B cell (primary cell): ENCODE measurements at regions of chr11 and their contacts with region 1.

Region 1: DNA sequence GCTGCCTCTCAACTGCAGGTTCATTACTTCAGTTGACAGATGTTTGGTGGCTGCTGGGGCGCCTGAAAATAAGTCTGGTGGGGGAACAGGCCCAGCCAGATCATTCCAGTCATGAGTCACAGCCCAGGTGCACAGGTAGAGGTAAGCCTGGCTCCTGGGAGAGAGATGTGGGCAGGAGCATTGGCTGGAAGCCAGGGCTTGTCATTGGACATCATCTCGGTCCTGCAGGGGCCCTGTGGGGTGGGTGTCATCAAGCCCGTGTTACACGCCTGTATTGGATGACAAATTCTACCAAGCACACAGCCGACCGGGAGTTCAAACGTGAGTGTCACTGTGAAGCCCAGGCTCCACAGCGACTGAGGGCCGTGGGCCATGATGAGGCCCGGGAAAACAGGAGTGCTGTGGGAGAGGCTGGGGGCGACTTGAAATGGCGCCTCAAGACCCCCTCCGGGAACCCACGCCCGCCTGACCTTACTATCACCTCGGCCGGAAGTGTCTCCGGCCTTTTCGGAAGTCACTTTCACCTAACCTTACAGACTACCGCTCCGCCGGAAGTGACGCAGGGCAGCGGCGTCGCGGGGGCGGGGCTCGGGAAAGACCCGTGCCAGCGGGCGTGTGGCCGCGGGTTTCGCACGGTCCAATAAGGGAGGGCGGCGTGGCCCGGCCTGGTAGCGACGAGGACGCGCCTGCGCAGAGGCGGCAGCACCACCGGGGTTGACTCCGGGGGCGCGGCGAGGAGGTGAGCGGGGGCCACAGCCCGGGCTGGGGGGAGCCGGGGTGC is at the start of gene FKBP2:
- DNase-seq: peak; percentile 99
- ATAC-seq: peak; percentile 58
- H3K4me3 ChIP-seq: peak within 1 kb of the TSS in 4 of 5 experiments; percentile 76 to 91 (median 83)
- H3K4me3 Mint-ChIP-seq: peak within 1 kb of the TSS; percentile 91
- H3K27ac ChIP-seq: peak within 1 kb of the TSS; percentile 98
- H3K27ac Mint-ChIP-seq: peak within 1 kb of the TSS; percentile 97
- H3K4me1 ChIP-seq: peaks cover 31 to 63% of the 10 kb centered on the region in 2 donors
- H3K4me1 Mint-ChIP-seq: peaks cover 62% of the 10 kb centered on the region
- H3K27me3 ChIP-seq: no peaks in the 10 kb centered on the region
- H3K27me3 Mint-ChIP-seq: no peaks in the 10 kb centered on the region
- CTCF ChIP-seq: no peak
- total RNA-seq, gene FKBP2: 23.7 and 25.7 TPM in 2 replicates

Region 2: DNA sequence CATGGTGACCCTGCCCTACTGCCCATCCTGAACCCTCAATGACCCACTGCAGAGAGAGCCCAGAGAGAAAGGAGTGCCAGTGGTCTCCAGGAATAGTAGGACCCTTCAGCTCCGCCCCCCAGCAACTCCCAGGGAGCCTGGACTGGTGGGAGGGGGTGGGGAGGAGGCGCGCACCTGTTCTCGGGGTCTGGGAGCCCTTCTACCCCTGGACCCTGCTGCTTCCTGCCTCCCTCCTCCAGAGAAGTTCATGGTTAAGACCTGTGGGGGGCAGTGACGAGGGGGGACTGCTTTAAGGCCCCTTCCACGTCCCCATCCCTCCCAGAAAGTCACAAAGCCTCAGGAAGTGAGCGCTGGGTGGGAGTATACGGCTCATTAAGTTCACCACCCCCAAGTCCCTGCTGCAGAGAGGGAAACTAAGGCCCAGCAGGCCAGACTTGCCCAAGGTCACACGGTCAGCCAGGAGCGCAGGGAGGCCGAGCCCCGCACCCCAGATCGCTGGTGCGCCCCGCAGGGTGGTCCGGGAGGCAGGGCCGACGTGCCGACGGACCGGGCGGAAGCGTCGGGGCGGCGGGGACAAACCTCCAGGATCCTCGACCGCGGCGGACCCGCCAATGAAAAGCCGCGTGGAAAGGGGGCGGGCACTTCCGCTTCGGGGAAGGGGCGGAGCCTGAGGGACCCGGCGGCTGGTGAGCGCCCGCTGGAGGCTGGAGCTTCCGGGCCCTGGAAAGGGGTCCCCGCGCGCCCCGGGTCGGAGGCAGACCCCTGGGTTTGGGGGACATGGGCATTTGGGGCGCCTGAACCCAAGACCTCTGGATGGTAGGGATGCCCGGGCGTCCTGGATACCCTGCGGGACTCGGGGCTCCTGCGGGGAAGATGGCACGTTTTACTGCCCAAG is 14.7 kb before region 1 on chr11 and contains the starts of genes NUDT22 and TRPT1:
- CTCF ChIA-PET with region 1: interaction called, 7 read pairs
- POLR2A ChIA-PET with region 1: interaction called, 22 read pairs
- intact Hi-C with region 1: loop called (anchors 1 kb)
- DNase-seq: peak; percentile 91
- ATAC-seq: peak; percentile 53
- H3K4me3 ChIP-seq: peak within 1 kb of the TSS; percentile 64 to 97 (median 92)
- H3K4me3 Mint-ChIP-seq: peak within 1 kb of the TSS; percentile 91
- H3K27ac ChIP-seq: peak within 1 kb of the TSS; percentile 82 to 86
- H3K27ac Mint-ChIP-seq: peak within 1 kb of the TSS; percentile 93
- H3K4me1 ChIP-seq: peaks cover 26 to 41% of the 10 kb centered on the region in 2 donors
- H3K4me1 Mint-ChIP-seq: peaks cover 43% of the 10 kb centered on the region
- H3K27me3 ChIP-seq: no peaks in the 10 kb centered on the region
- H3K27me3 Mint-ChIP-seq: no peaks in the 10 kb centered on the region
- CTCF ChIP-seq: peak; percentile 63
- total RNA-seq, gene NUDT22: 97.2 and 104 TPM in 2 replicates
- total RNA-seq, gene TRPT1: 59.6 and 62.0 TPM in 2 replicates